Prostate gland (tissue), 2 donors: ENCODE measurements at regions of chr10 and their contacts with region 1.

Region 1: DNA sequence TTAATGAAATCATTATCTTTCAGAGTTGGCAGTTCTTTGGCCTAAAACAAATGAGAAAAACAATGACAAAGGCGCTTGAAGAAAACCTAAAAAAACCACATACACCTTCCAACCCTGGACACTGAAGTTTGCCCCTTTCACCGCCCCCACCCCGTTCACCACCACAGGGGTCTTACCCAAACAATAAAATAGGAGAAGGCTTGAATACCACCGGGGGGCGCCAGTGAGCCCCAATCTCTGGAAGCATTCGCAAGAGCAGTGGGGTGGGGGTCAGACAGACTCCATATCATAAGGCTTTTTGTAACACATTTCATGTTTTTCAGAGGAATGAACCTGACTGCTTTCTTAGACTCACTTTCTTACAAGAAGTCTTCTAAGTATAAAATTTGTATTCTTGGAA is 163.6 kb downstream of the PIP4K2A start:
- DNase-seq: no peak
- H3K4me3 ChIP-seq: no peak overlapping the region
- H3K27ac ChIP-seq: no peak overlapping the region
- H3K4me1 ChIP-seq: no peaks in the 10 kb centered on the region
- H3K27me3 ChIP-seq: no peaks in the 10 kb centered on the region
- CTCF ChIP-seq: peak in 3 of 4 experiments; percentile 11 to 26 (median 21)
- POLR2A ChIP-seq: no peak

Region 2: GRCh38 chr10:22491931-22492615 is 58.7 kb before region 1 on chr10:
- intact Hi-C with region 1: no loop called
- DNase-seq: no peak
- H3K4me3 ChIP-seq: no peak overlapping the region
- H3K27ac ChIP-seq: no peak overlapping the region
- H3K4me1 ChIP-seq: no peaks in the 10 kb centered on the region
- H3K27me3 ChIP-seq: no peaks in the 10 kb centered on the region
- CTCF ChIP-seq: no peak
- POLR2A ChIP-seq: no peak

Region 3: GRCh38 chr10:22505911-22506685 is 44.6 kb before region 1 on chr10:
- intact Hi-C with region 1: loop called (anchors 5 kb)
- DNase-seq: peak; percentile 85
- H3K4me3 ChIP-seq: no peak overlapping the region
- H3K27ac ChIP-seq: no peak overlapping the region
- H3K4me1 ChIP-seq: peaks cover 3% of the 10 kb centered on the region
- H3K27me3 ChIP-seq: no peaks in the 10 kb centered on the region
- CTCF ChIP-seq: no peak
- POLR2A ChIP-seq: no peak

Region 4: DNA sequence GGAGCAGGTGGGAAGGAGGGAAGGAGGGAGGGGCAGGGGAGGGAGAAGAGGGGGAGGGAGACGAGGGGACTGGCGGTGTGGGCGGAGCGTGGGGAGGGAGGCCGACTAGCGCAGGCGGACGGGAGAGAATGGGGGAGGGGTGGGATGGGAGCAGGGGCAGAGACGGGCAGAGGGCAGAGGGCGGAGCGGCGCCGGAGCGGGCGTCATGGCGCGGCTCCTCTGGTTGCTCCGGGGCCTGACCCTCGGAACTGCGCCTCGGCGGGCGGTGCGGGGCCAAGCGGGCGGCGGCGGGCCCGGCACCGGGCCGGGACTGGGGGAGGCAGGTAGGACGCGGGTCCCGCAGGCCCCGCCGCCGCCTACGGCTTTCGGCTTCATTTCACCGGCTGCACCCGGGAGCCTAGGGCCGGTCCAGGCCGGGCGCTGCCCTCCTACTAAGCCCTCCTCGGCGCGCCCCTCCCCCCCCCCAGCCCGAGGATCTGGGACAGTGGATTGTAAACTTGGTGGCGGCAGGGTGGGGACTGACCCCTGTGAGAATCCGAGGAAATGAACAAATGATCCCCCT is 544.8 kb after region 1 on chr10 and contains the start of gene MSRB2:
- intact Hi-C with region 1: loop called (anchors 10 kb)
- DNase-seq: peak; percentile 92
- H3K4me3 ChIP-seq: peak within 1 kb of the TSS; percentile 77 to 87
- H3K27ac ChIP-seq: peak within 1 kb of the TSS; percentile 87 to 88
- H3K4me1 ChIP-seq: no peaks in the 10 kb centered on the region
- H3K27me3 ChIP-seq: no peaks in the 10 kb centered on the region
- CTCF ChIP-seq: peak in 1 of 4 experiments; percentile 8
- POLR2A ChIP-seq: peak; percentile 92
- total RNA-seq, gene MSRB2: 21.2 to 24.5 TPM